BJ (cell line): ENCODE measurements at regions of chr1 and their contacts with region 1.

Region 1: GRCh38 chr1:42747125-42747524 is 7.1 kb upstream of the CLDN19 start:
- DNase-seq: no peak
- H3K4me3 ChIP-seq: no peak overlapping the region
- H3K27me3 ChIP-seq: no peaks in the 10 kb centered on the region
- CTCF ChIP-seq: peak; percentile 65

Region 2: DNA sequence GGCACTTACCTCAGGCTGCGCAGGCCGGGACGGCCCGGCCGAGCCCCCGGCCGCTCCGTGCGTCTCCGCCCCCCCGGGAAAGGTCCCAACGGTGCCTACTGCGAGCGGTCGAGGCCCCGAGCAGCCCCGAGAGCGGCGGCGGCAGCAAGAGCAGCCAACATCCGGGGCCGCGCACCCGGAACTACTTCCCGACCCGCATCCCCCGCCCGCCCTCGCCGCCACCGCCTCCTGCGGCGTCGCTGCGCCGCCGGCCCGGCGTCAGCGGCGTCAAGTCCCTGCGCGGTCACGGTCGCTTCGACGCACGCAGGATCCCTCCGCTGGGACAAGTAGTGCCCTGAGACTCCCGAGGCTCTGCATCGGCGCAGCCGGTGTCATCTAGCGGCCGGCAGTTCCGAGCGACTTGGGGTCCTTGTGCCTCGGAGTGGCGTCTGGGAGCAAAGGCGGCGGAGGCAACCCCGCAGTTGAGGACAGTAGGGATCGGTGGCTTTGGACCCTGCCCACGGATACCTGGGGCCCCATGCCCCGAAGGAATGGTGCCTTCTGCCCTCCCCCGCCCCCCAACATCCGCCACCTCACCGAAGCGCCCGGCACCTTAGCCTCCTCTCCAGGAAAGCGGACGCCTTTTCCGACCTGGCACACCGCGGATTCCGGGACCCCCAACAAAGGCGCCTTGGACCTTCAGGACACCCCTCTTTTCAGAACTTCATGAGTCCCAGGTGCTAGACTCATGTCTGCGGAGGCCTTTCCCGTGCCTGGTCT is 411.9 kb before region 1 on chr1 and contains the start of gene FOXJ3:
- CTCF ChIA-PET with region 1: no interaction called
- POLR2A ChIA-PET with region 1: no interaction called
- DNase-seq: peak; percentile 46
- H3K4me3 ChIP-seq: peak within 1 kb of the TSS; percentile 84
- H3K27me3 ChIP-seq: no peaks in the 10 kb centered on the region
- CTCF ChIP-seq: no peak
- polyA plus RNA-seq, gene FOXJ3: 22.9 and 27.0 TPM in 2 replicates

Region 3: DNA sequence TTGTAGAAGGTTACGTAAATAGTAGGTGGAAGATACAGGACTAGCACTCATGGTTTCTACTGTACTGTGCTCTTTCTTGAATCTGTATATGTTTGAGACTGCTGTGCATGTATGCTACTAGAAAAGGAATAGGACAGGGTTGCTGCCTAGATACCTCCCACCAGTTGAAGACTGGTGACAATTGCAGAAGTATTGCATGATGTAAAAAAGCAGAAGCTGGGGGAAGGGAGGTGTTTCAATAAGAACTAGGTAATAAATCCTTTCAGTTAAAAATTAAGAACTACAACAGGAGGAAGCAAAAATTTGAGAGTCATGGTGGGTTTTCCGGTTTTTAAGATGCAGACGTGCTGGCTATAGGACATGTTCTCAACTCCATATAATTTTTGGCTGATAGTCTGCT is 195.9 kb before region 1 on chr1:
- CTCF ChIA-PET with region 1: no interaction called
- POLR2A ChIA-PET with region 1: no interaction called
- DNase-seq: no peak
- H3K4me3 ChIP-seq: no peak overlapping the region
- H3K27me3 ChIP-seq: no peaks in the 10 kb centered on the region
- CTCF ChIP-seq: no peak

Region 4: GRCh38 chr1:42576935-42577334 is 170.2 kb before region 1 on chr1:
- CTCF ChIA-PET with region 1: interaction called, 15 read pairs
- POLR2A ChIA-PET with region 1: no interaction called
- DNase-seq: no peak
- H3K4me3 ChIP-seq: no peak overlapping the region
- H3K27me3 ChIP-seq: no peaks in the 10 kb centered on the region
- CTCF ChIP-seq: no peak

Region 5: GRCh38 chr1:42690477-42691156 is 56.5 kb before region 1 on chr1:
- CTCF ChIA-PET with region 1: no interaction called
- POLR2A ChIA-PET with region 1: no interaction called
- DNase-seq: no peak
- H3K4me3 ChIP-seq: no peak overlapping the region
- H3K27me3 ChIP-seq: no peaks in the 10 kb centered on the region
- CTCF ChIP-seq: no peak

Region 6: DNA sequence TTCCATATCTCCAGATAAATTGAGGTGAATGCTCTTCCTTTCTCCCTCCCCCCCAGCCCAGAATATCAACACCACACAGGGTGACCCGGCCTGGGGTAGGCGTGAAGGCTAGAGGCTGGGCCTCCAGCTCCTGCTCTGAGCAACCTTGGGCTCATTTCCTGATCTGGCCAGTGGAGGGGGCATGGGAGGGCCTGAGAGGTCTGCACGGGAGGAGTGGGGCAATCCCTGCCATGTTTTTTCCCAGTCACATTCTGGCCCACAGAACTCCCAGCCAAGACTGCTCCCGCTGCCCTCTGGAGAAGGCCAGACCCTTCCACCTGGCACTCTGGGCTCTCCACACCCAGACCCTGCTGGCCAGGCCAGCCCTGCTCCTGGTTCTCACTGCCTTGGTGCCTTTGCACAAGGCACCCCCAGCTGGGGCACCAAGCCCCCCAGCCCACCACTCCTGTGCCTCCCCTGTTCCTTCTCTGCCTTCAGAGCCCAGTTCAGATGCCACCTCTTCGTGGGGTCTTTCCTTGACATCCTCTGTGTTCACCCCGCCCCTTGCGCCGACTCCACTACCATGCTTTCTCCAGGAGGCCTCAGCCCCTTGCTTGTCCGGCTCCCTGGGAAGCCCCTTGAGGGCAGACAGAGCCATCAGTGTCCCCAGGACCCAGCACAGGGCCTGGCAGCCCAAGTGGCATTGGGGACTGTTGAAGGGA is 10.8 kb before region 1 on chr1:
- CTCF ChIA-PET with region 1: interaction called, 28 read pairs
- POLR2A ChIA-PET with region 1: no interaction called
- DNase-seq: no peak
- H3K4me3 ChIP-seq: no peak overlapping the region
- H3K27me3 ChIP-seq: no peaks in the 10 kb centered on the region
- CTCF ChIP-seq: peak; percentile 44